ENCODE measurements at regions of chr1 and their contacts with region 1.

Region 1: DNA sequence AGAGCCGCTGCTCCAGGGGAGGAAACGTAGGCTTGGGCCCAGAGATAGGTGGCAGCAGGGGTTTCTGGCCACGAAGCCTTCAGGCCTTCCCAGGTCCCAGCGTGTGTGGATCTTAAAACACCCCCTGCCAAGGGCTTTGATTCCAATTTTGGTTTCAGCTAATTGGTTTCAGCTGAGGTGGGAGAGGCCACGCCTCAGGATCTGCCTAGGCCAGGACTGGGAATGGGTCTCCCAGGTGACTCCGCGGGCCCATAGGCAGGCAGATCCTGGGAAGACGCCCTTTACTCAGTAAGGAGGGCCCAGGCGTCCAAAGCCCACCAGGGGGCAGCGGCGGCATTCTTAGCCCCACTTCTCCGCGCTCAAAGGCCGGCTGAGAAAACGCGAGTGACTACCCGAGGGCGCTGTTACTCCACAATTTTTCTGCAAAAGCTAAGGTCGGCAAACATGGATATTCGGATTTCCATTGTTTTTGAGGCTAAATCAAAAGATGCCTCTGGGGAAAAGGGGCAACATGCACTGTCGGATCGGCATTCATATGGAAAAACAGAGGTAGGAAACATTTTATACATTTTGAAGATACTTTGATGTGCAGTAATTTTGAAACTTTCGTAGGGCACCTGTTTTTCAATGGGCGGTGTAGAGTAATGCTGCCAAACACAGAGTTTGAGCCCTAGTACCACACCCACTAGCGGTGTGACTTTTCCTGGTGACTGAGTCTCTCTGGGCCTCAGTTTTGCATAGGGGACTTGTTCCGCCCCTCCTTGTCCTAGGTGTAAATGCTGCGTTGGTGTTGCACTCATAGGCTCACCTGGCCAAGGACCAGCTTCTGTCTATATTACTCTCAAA is 31.8 kb upstream of the BCL10 start:
- DNase-seq: peak; percentile 92

Region 2: GRCh38 chr1:85398391-85399064 is 90.3 kb after region 1 on chr1:
- intact Hi-C with region 1: loop called (anchors 1 kb)
- DNase-seq: no peak

Region 3: DNA sequence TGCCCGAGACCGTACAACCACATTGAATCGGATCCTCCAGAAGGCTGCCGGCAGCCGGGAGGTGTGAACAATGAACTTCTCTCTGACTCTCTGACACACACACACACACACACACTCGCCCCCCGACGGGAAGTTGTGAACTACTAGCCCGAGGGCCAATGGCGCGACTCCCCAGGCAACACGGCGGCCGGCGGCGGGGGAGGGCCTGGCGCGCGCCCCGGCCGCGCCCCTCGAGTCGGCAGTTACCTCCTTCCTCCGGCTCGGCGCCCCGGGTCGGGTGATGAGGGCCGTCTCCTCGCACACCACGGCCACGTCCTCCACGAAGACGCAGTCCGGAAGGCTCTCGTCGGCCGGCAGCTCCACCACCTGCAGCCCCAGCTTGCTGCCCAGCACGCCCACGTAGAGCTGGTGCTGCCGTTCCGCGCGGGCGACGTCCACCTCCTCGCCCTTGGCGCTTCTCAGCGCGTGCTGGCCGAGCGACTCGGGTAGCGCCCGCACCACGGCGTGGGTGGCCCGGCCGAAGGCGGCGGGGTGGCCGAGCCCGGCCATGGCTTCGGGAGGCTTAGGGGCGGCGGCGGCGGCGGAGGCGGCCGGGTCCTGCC is 156.4 kb after region 1 on chr1:
- intact Hi-C with region 1: loop called (anchors 5 kb)
- DNase-seq: peak; percentile 84

Region 4: GRCh38 chr1:85484264-85484663 is 176.1 kb after region 1 on chr1:
- intact Hi-C with region 1: no loop called
- DNase-seq: no peak

Region 5: DNA sequence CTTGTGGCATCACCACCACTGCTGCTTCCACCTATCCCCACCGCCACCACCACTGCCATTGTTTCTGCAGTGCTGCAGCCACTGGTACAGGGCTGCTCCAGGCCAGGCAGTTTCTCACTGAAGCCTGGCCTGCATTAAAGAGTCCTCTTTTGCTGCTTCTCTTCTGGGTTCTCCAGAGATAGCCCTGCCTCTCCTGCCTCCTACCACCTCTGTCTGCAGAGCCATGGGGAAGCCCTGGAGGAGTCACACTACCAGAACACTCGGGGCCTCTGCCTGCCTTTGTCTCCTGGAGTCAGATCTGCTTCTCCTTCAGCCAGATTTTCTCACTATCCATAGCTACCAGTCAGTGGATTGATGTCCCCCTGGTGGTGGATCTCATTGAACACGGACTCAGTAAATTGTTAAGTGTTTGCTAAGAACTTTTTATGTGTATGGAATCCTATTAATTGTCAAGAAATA is 194.4 kb after region 1 on chr1:
- intact Hi-C with region 1: loop called (anchors 2 kb)
- DNase-seq: no peak

Region 6: DNA sequence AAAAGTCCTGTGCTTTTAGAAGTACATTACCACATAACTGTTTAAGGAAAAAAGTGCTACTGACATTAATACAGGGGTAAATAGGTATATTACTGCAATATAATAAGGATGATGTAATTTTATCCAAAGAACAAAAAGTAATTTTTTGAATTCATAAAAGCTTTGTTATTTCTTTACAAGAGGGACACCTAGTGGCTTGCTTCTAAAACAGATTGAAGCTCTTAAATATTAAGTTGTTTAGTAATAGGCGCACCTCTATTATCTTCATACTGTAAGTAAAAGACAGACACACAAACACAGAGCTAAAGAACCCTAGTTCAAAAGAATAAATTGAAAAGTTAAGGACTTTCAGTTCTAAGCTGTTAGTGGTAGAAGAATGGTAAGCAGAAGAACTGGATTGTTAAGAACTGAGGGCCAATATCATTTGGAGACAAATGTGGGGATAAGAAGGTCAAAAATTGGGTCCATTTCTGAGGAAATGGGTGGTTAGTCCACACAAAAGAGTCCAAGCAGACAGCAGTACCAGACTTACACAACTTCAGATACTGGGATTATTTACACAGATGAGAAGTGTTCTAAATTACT is 384.6 kb after region 1 on chr1:
- intact Hi-C with region 1: loop called (anchors 1 kb)
- DNase-seq: no peak

Region 7: DNA sequence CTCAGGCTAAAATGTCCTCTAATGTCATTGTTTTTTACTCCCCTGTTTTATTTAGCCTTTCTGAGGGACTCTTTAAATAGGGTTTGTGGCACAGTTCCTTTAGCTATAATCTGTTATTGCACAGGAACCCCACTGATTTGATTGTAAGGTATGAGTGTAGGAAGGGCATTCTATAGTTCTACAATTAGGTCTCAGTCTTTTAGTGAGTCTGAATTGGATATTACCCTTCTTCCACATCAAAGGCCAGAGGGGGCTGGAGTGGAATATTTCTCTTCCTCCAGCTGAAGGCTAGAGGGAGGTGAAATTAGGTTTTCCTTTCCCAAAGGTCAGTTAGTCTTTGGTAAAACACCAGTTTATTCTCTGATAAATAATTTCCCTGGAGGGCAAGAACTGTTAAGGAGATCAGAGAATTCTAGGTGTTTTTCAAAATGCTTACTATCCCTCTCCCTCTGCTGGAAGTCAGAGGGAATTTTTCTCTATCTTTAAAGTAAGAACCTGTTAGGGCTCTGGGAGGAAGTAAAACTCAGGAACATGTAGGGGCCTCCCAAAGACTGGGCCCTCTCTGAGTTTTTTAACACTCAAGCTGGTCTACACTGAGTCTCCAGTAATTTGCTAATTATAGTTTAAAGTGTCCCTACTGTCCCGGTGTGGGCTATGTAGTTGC is 576.3 kb after region 1 on chr1:
- intact Hi-C with region 1: loop called (anchors 10 kb)
- DNase-seq: no peak

Region 8: GRCh38 chr1:86018283-86018923 is 710.2 kb after region 1 on chr1:
- intact Hi-C with region 1: loop called (anchors 10 kb)
- DNase-seq: no peak

Measured in cardiac septum (tissue), 1 donor.